ENCODE measurements at regions of chr16 and their contacts with region 1.

Region 1: GRCh38 chr16:68270353-68270752 is 6.0 kb downstream of the SLC7A6 start:
- DNase-seq: no peak
- ATAC-seq: no peak
- H3K4me3 ChIP-seq: no peak overlapping the region
- H3K4me3 Mint-ChIP-seq: no peak overlapping the region
- H3K27ac ChIP-seq: peak overlapping the region in 1 of 2 donors; percentile 71
- H3K27ac Mint-ChIP-seq: peak overlapping the region; percentile 13
- H3K4me1 ChIP-seq: peaks cover 43 to 57% of the 10 kb centered on the region in 2 donors
- H3K4me1 Mint-ChIP-seq: peaks cover 62% of the 10 kb centered on the region
- H3K27me3 ChIP-seq: no peaks in the 10 kb centered on the region
- H3K27me3 Mint-ChIP-seq: no peaks in the 10 kb centered on the region
- CTCF ChIP-seq: no peak

Region 2: DNA sequence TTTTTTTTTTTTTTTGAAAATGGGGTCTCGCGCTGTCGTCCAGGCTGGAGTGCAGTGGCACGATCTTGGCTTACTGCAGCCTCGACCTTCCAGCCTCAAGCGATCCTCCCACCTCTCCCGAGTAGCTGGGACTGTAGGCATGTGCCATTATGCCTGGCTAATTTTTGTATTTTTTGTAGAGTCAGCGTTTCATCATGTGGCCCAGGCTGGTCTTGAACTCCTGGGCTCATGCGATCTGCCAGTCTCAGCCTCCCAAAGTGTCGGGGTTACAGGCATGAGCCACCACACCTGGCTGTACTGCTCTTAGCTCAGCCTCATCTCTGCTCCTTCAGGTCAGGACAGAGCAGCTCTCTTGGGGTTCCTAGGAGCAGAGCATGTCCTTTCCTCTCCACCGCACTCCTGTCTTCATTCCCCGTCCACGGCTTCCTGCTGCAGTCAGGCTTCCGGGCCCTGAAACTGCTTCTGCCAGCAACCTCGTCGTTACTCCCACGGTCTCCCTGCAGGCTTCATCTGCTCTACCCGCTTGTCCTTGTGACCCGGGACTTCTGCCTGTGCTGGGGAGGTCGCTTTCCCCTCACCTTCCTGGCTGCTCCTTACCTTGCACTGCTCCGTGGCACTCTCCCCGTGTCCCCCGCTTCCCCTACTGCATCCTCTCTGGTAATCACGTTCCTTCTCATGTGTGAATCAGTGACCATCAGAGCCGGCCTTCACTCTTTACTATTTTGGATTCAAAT is 78.5 kb after region 1 on chr16:
- CTCF ChIA-PET with region 1: no interaction called
- POLR2A ChIA-PET with region 1: interaction called, 12 read pairs
- intact Hi-C with region 1: no loop called
- DNase-seq: no peak
- ATAC-seq: no peak
- H3K4me3 ChIP-seq: no peak overlapping the region
- H3K4me3 Mint-ChIP-seq: no peak overlapping the region
- H3K27ac ChIP-seq: no peak overlapping the region
- H3K27ac Mint-ChIP-seq: no peak overlapping the region
- H3K4me1 ChIP-seq: no peaks in the 10 kb centered on the region
- H3K4me1 Mint-ChIP-seq: no peaks in the 10 kb centered on the region
- H3K27me3 ChIP-seq: no peaks in the 10 kb centered on the region
- H3K27me3 Mint-ChIP-seq: no peaks in the 10 kb centered on the region
- CTCF ChIP-seq: no peak

Measured in B cell (primary cell).